Panc1 (cell line): ENCODE measurements at regions of chr11 and their contacts with region 1.

Region 1: DNA sequence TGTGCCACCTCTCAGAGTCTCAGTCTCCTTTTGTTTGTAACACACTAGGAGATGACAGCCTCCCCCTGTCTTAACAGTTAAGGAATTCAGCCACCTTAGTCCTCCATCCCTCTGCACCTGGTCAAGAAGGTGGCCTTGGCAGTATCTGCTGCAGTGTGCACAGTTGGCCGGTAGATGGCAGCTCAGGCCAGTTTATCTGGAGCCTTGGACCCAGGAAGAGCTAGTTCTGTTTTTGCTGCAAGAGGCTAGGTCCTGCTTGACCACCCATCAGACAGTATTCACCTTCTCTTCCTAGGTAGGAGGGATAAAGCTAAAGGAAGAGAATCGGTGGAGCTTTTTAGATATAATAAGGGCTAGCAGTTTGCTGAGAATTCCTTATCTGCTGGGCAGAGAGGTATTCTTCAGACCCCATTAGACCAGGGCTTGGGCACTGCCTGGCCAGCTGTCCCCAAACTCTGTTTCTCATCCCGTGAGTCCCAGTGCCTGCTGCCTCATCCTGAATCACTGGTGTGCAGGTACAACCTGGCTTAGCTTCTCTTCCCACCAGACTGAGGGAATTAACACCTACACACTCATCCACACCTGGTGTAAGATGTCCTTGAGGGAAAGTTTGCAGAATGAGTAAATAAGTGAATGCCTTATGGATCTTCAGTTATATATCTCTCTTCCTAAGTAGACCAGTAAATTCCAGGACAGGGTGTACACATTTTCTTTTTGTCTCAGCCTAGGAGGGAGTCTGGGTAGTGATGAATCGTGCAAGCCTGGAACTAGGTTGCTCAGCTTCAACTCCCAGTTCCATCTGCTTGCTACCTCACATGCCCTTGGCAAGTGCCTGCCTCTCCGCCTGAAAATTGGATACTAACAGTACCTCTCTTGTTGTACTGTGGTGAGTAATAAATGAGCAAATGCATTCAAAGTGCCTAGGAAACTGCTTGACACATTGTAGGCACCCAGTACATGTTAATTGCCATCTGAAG is 70.8 kb upstream of the NARS2 start:
- DNase-seq: peak; percentile 66
- ATAC-seq: peak; percentile 87
- H3K4me3 ChIP-seq: no peak overlapping the region
- H3K27ac ChIP-seq: no peak overlapping the region
- H3K4me1 ChIP-seq: 0 out of 2 replicates have a peak, but pooled peaks cover 2% of the 10 kb centered on the region
- H3K27me3 ChIP-seq: peaks cover 11% of the 10 kb centered on the region; the same call in 1 of the 2 replicates
- CTCF ChIP-seq: peak; percentile 96

Region 2: DNA sequence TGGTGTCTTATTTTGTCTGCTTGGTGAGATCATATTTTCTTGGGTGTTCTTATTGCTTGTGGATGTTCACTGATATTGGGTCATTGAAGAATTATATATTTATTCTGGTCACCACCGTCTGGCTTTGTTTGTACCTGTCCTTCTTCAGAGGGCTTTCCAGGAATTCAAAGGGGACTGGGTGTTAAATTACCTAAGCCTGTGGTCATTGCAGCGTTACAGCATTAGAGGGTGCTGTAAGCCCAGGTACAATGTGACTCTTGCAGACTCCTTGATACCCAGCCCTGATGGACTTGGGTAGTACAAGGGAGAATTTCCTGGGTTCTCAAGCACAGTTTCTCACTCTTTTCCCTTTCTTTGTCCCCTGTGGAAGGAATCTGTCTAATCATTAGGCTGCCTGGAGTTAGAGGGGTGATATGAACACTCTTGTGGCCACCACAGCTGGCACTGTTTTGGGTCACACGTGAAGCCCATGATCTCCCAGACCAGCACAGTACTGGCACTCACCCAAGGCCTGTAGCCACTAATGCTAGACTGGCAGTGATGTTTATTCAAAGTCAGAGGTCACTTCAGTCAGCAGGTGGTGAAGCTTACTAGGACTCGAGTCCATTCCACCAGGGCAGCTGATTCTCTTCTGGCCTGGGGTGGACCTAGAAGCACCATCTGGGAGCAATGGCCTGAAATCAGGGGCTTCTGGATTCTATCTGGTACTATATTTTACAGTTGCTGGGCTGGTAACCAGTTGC is 14.8 kb before region 1 on chr11:
- CTCF ChIA-PET with region 1: no interaction called
- POLR2A ChIA-PET with region 1: interaction called, 11 read pairs
- in situ Hi-C with region 1: no loop called
- intact Hi-C with region 1: no loop called
- DNase-seq: no peak
- ATAC-seq: no peak
- H3K4me3 ChIP-seq: no peak overlapping the region
- H3K27ac ChIP-seq: no peak overlapping the region
- H3K4me1 ChIP-seq: no peaks in the 10 kb centered on the region
- H3K27me3 ChIP-seq: no peaks in the 10 kb centered on the region
- CTCF ChIP-seq: no peak

Region 3: DNA sequence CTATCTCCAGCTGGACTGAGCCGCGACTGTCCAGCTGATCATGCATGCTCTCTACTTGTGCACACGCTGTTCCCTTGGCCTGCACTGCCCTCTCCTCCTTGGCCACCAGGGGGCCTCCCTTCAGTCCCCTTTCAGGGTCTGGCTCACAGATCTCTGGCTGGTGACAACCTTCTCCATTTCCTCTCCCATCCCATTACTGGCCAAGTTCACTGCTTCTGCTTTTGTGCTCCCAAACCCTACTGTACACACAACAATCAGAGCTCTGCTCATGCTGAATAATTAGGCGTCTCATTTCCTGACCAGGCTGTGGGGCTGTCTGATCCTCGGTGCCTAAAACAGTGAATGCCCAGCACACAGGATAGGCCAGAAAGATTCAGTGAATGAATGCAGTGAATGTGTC is 153.1 kb after region 1 on chr11:
- CTCF ChIA-PET with region 1: no interaction called
- POLR2A ChIA-PET with region 1: no interaction called
- in situ Hi-C with region 1: no loop called
- intact Hi-C with region 1: loop called (anchors 5 kb)
- DNase-seq: peak; percentile 30
- ATAC-seq: peak; percentile 81
- H3K4me3 ChIP-seq: no peak overlapping the region
- H3K27ac ChIP-seq: no peak overlapping the region
- H3K4me1 ChIP-seq: peaks cover 2% of the 10 kb centered on the region; the same call in 1 of the 2 replicates
- H3K27me3 ChIP-seq: no peaks in the 10 kb centered on the region
- CTCF ChIP-seq: peak; percentile 91

Region 4: DNA sequence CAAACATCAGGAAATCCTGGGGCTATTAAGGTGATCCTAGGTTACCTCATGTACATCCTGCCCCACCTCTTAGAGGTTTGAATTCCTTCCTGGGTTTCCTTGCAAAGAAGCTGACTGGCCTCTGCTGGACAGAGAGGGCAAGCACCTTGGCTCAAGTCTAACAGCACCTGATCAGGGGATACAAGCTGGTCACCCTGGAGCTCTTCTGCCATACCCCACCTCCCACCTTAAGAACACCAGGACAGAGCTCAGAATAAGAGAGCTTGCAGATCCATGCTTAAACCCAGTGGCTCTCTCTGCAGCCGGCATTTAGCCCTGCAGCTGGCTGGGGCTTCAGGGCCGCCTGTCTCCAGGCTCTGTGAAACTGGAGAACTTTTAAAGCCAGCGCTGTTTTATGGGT is 315.7 kb after region 1 on chr11:
- CTCF ChIA-PET with region 1: interaction called, 7 read pairs
- POLR2A ChIA-PET with region 1: no interaction called
- in situ Hi-C with region 1: no loop called
- intact Hi-C with region 1: loop called (anchors 1 kb)
- DNase-seq: no peak
- ATAC-seq: peak; percentile 85
- H3K4me3 ChIP-seq: no peak overlapping the region; a peak in 1 of 4 replicates
- H3K27ac ChIP-seq: no peak overlapping the region
- H3K4me1 ChIP-seq: no peaks in the 10 kb centered on the region
- H3K27me3 ChIP-seq: no peaks in the 10 kb centered on the region
- CTCF ChIP-seq: peak; percentile 77

Region 5: DNA sequence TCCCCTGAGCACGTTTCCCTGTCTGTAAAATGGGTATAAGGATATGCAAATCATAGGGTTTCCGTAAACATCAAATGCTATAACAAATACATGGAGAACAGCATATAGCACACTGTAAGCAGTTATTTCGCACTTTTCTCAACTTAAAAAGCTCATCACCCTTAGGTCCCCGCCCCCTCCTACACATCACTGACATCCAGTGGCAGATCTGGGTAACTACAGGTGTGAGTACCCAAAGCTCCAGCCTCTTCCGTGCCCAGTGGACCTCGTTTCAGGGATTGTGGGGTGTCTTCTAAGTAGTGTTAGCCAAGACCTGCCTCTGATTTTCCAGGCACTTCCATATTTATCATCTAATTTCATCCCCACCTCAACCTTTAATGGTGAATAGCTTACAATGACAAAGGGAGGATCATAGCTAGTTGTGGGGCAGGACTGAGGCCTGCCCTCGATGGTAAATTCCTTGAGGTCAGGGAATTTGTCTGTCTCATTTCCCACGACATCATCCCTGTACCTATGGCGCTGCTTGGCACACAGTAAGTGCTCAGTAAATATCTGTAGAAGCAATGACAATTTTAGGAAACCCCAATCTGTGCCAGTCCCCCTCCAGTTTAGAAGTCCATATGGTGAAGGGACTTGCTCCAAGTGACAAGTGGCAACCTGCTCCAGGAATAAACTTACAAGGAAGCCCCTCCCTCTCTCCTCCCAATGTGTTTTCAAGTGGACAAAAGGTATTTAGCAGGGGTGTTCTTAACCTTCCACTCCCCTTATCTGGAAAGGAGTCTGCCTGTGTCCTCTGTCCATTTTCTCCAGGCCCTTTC is 454.8 kb after region 1 on chr11:
- CTCF ChIA-PET with region 1: interaction called, 18 read pairs
- POLR2A ChIA-PET with region 1: interaction called, 3 read pairs
- in situ Hi-C with region 1: no loop called
- intact Hi-C with region 1: no loop called
- DNase-seq: peak; percentile 43
- ATAC-seq: peak; percentile 89
- H3K4me3 ChIP-seq: no peak overlapping the region
- H3K27ac ChIP-seq: no peak overlapping the region
- H3K4me1 ChIP-seq: no peaks in the 10 kb centered on the region
- H3K27me3 ChIP-seq: no peaks in the 10 kb centered on the region; the same call in 1 of the 2 replicates
- CTCF ChIP-seq: peak; percentile 90

Region 6: GRCh38 chr11:79331203-79331901 is 685.8 kb after region 1 on chr11:
- CTCF ChIA-PET with region 1: no interaction called
- POLR2A ChIA-PET with region 1: no interaction called
- in situ Hi-C with region 1: no loop called
- intact Hi-C with region 1: no loop called
- DNase-seq: no peak
- ATAC-seq: no peak
- H3K4me3 ChIP-seq: no peak overlapping the region
- H3K27ac ChIP-seq: no peak overlapping the region
- H3K4me1 ChIP-seq: no peaks in the 10 kb centered on the region
- H3K27me3 ChIP-seq: peaks cover 3% of the 10 kb centered on the region
- CTCF ChIP-seq: no peak

Region 7: GRCh38 chr11:80155412-80156017 is 1510.0 kb after region 1 on chr11:
- CTCF ChIA-PET with region 1: no interaction called
- POLR2A ChIA-PET with region 1: no interaction called
- in situ Hi-C with region 1: no loop called
- intact Hi-C with region 1: loop called (anchors 10 kb)
- DNase-seq: peak; percentile 17
- ATAC-seq: peak; percentile 60; the same call in 1 of the 2 replicates
- H3K4me3 ChIP-seq: no peak overlapping the region
- H3K27ac ChIP-seq: no peak overlapping the region
- H3K4me1 ChIP-seq: no peaks in the 10 kb centered on the region
- H3K27me3 ChIP-seq: no peaks in the 10 kb centered on the region
- CTCF ChIP-seq: peak; percentile 75